ENCODE measurements at regions of chr1 and their contacts with region 1.

Region 1: DNA sequence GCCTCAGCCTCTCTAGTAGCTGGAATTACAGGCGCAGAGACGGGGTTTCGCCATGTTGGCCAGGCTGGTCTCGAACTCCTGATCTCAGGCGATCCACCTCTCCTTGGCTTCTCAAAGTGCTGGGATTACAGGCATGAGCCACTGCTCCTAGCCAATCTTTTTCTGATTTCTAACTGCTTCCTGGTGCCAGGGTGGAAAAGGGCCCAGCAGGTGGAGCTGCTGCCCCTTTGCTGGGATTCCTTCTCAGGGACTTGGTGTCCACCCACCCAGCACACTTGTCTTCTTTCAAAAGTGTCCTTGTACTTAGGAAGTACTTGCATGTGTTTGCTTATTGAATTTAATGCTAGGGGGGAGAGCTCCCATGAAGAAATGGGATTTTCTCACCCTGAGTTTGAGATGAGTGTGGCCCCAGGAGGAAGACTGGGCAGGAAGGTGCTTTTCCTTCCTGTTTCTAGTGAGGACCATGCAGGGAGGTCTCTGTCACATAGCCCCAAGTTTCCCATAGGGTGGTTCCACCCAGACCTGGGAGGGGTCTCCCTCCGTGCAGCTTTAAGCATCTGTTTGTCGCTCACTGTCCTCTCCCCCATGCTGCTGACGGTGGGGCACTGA is 14.2 kb downstream of the UTP11 start:
- DNase-seq: peak in 2 of 6 donors; percentile 67 to 74
- ATAC-seq: peak in 3 of 4 donors; percentile 44 to 53 (median 45)
- H3K4me3 ChIP-seq: no peak overlapping the region
- H3K27ac ChIP-seq: no peak overlapping the region
- H3K4me1 ChIP-seq: peaks cover 14 to 22% (median 21%) of the 10 kb centered on the region in 3 donors
- H3K27me3 ChIP-seq: no peaks in the 10 kb centered on the region
- CTCF ChIP-seq: peak; percentile 12 to 47 (median 40)

Region 2: DNA sequence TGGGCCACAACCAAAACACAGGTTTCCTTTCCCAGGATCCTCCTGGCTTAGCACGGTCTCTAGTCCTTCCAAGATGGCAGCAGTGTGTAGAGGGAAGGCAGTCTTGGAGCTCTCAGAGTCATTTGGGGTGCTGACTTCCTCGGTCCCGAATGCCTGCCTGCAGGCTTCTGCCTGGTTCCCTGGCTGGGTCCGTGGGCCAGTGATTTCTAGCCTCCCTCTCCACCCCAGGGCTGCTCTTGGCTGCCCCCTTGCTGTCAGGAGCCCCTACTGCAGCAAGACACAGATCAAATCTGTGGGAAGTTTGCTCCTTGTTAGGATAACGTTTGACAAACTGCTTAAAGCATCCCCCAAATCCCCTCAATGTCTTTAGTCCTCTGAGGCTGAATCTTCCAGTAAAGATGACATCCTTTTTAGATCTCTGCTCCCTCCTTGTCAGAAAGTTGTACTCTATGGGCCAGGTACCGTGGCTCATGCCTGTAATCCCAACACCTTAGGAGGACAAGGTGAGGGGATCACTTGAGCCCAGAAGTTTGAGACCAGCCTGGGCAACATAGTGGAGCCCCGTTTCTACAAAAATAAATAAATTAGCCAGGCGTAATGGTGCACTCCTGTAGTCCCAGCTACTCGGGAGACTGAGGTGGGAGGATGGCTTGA is 560.4 kb after region 1 on chr1:
- intact Hi-C with region 1: loop called in 1 of 3 experiments (anchors 5 kb)
- DNase-seq: peak in 5 of 6 donors; percentile 21 to 82 (median 47)
- ATAC-seq: peak in 3 of 4 donors; percentile 73 to 93 (median 82)
- H3K4me3 ChIP-seq: no peak overlapping the region
- H3K27ac ChIP-seq: no peak overlapping the region
- H3K4me1 ChIP-seq: no peaks in the 10 kb centered on the region
- H3K27me3 ChIP-seq: no peaks in the 10 kb centered on the region
- CTCF ChIP-seq: peak; percentile 68 to 81 (median 71)

Region 3: DNA sequence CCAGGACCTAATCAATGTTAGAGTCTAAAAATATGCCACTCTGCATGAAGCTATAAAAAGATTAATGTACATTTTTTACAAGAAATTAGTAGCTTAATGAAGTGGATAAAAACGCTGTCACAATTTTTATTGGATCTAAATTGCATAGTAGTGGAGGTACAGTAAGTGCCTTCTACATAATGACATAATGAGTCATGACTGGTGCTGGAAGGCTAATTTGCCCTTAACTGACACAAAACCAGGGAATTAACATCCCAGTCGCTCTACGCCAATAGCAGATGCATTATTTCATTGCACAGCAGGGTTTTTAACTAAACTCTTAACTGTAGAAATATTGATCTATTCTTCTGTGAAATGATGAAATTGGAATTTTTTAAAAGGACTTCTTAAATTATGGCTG is 799.6 kb after region 1 on chr1:
- intact Hi-C with region 1: loop called in 2 of 3 experiments (anchors 5 to 10 kb)
- DNase-seq: no peak
- ATAC-seq: no peak
- H3K4me3 ChIP-seq: no peak overlapping the region
- H3K27ac ChIP-seq: no peak overlapping the region
- H3K4me1 ChIP-seq: no peaks in the 10 kb centered on the region
- H3K27me3 ChIP-seq: peaks cover 0 to 7% (median 3%) of the 10 kb centered on the region in 4 donors
- CTCF ChIP-seq: no peak

Region 4: DNA sequence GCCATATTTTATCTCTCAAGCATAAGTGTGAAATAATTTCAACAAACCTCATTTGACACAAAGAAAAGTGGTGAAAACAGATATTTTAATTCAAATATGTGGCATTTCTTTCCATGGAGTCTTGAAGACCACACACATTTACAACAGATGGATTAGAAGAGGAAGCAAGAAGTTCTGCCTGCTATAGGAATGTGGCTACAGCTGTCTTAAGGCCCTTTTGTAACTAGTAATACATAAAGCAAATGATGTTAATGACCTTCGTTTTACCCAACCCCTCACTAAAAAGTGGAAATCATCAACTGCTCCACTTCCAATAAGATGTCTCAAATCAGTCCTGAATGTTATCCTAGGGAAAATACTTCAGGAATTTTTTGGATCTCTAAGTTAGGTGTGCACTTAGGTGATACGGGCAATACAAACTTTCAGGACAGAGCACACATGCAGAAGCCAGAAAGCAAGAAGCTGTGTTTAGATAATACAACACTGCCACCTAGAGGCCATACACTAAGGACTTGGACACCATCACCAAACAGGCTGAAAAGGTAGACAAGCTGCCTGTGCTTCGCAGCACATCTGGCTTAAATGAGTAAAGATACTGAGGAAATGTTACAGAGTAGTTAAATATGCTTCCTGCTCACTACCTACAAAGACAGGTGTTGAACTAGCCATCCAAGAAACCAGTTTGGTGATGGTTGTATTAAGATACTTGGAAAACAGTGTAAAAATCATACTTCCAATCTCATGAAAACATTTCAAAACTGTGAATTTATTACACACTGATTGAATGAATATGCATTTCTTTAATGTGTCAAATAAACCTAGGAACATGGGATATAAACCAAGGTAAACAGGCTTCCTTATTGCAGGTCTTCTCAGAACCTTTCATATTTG is 808.5 kb after region 1 on chr1:
- intact Hi-C with region 1: loop called in 1 of 3 experiments (anchors 5 kb)
- DNase-seq: peak in 3 of 6 donors; percentile 23 to 60 (median 47)
- ATAC-seq: peak; percentile 79 to 98 (median 96)
- H3K4me3 ChIP-seq: no peak overlapping the region
- H3K27ac ChIP-seq: no peak overlapping the region
- H3K4me1 ChIP-seq: no peaks in the 10 kb centered on the region
- H3K27me3 ChIP-seq: no peaks in the 10 kb centered on the region
- CTCF ChIP-seq: peak; percentile 71 to 88 (median 80)

Measured in pancreas (tissue), 10 donors.